ENCODE measurements at regions of chr19 and their contacts with region 1.

Region 1: DNA sequence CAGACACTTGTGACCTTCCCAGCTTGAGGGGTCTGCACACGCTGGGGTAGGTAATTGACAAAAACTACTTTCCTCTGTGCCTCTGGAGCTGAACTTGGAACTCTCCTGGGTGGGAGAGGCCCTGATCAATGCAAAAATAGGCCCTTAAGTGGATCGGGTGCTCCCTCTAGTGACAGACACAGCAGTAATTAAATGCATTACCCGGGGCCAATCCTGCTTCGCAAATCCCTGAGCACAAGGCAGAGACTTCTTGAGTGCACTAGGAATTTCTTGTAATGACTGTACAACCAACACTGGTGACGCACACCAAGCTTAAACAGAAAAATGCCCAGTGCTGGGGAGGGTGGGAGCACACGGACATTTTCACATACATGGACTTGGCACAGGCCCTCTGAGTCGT is 10.6 kb upstream of the UBE2S start:
- DNase-seq: peak in 8 of 9 donors; percentile 34 to 72 (median 58)
- ATAC-seq: peak; percentile 82
- H3K4me3 ChIP-seq: no peak overlapping the region
- H3K4me3 Mint-ChIP-seq: peak overlapping the region in 2 of 10 donors; percentile 30 to 41
- H3K27ac ChIP-seq: no peak overlapping the region
- H3K27ac Mint-ChIP-seq: peak overlapping the region in 4 of 9 donors; percentile 7 to 90 (median 31)
- H3K4me1 ChIP-seq: peaks cover 16 to 29% of the 10 kb centered on the region in 2 donors
- H3K4me1 Mint-ChIP-seq: peaks cover 7 to 36% (median 23%) of the 10 kb centered on the region in 7 donors
- H3K27me3 ChIP-seq: no peaks in the 10 kb centered on the region
- H3K27me3 Mint-ChIP-seq: peaks cover 0 to 24% (median 0%) of the 10 kb centered on the region in 5 donors

Region 2: DNA sequence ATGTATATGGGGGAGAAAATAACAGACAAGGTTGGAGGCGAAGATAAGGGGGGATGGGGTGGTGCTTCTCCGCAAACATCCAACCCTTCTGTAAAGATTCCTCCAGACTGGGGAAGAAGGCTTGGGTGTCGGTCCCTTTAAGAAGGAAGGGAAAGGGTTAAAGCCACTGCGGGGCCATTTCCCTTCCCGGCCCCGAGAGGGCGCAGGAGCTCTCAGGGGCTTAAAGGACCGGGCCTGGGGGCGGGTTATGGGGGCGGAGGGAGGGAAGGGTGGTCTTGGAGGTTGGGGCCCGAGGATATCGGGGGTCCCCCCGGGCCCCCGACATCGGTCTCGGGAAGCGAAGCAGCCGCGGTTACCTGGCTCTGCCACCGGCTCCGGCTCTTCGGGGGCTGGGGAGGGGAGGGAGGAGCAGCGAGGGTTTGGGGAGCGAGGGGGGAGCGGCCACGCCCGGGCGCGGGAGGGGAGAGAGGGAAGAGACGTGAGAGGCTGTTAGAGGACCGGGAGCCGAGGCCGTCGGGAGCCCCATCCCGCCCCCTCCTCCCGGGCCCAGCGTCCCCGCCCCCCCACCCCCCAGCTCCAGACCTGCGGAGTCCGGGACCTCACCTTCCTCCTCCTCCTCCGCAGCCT is 272.0 kb before region 1 on chr19:
- CTCF ChIA-PET with region 1: interaction called, 3 read pairs
- POLR2A ChIA-PET with region 1: no interaction called
- intact Hi-C with region 1: loop called (anchors 1 kb)
- DNase-seq: no peak
- ATAC-seq: no peak
- H3K4me3 ChIP-seq: no peak overlapping the region
- H3K4me3 Mint-ChIP-seq: peak overlapping the region in 1 of 10 donors; percentile 28
- H3K27ac ChIP-seq: no peak overlapping the region
- H3K27ac Mint-ChIP-seq: no peak overlapping the region
- H3K4me1 ChIP-seq: no peaks in the 10 kb centered on the region
- H3K4me1 Mint-ChIP-seq: peaks cover under 1 to 14% (median 8%) of the 10 kb centered on the region in 7 donors
- H3K27me3 ChIP-seq: peaks cover 10 to 11% of the 10 kb centered on the region in 2 donors
- H3K27me3 Mint-ChIP-seq: peaks cover 49 to 65% (median 52%) of the 10 kb centered on the region in 5 donors

Region 3: DNA sequence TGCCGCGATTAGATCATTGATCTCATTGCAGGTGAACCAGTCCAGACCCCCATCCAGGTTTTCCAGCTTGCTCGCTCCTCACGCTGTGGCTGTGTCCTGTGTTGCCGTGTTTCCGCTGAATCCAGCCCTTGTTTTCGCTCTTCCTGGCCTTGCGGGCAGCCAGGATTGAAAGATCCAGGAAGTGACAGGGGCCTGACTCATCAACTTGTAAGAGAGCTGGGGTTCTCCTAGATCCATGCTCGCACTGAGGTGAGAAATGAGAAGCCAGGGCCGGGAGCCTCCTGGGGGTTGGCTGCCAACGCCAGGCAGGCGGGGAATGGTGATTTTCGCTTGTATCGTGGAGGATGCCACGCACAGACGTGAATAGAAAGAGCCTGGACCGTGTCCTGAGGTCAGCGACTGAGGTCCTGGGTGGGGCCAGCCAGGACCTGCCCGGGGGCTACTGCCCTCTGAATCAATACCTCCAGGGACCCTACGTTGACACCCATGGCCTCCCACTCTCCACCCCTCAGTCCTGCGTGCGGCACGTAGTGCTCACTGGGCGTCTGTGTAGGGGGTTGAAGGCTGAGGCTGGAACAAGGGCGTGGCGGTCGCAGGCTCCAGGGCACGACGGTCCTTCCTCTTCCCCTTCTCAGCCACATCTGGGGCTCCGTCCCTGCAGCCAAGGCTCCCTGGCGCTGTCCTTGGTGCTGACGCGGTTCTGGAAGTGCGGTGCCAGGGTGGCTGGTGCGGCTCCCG is 201.6 kb before region 1 on chr19:
- CTCF ChIA-PET with region 1: no interaction called
- POLR2A ChIA-PET with region 1: no interaction called
- intact Hi-C with region 1: loop called in 1 of 2 experiments (anchors 1 kb)
- DNase-seq: peak in 8 of 9 donors; percentile 10 to 69 (median 32)
- ATAC-seq: peak; percentile 80
- H3K4me3 ChIP-seq: no peak overlapping the region
- H3K4me3 Mint-ChIP-seq: peak overlapping the region in 7 of 10 donors; percentile 16 to 66 (median 35)
- H3K27ac ChIP-seq: no peak overlapping the region
- H3K27ac Mint-ChIP-seq: peak overlapping the region in 2 of 9 donors; percentile 55 to 62
- H3K4me1 ChIP-seq: peaks cover 0 to 10% of the 10 kb centered on the region in 2 donors
- H3K4me1 Mint-ChIP-seq: peaks cover 11 to 18% (median 12%) of the 10 kb centered on the region in 7 donors
- H3K27me3 ChIP-seq: no peaks in the 10 kb centered on the region
- H3K27me3 Mint-ChIP-seq: peaks cover 5 to 31% (median 29%) of the 10 kb centered on the region in 5 donors

Region 4: DNA sequence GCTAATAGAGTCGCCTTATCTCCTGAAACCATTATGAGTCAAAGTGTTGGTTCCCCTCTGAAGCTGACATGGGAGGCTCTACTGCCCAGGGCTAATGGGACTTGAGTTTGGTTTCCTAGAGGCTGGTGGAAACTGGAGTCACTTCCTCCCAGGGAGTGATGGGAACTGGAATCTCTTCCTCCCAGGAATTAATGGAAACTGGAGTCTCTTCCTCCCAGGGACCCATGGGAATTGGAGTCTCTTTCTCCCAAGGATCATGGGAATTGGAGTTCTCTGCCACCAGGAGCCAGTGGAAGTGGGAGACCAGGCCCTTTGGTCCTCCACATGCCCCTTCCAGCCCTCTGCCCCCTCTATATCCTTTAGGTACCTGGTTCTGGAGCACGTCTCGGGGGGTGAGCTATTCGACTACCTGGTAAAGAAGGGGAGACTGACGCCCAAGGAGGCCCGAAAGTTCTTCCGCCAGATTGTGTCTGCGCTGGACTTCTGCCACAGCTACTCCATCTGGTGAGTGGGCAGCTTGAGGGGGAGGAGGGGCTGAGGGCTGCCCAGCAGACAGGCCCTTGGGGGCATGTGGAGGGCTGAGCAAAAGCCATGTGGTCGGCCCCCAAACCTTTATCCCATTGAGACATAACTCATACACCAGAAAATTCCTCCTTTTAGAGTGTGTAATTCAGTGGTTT is 128.9 kb before region 1 on chr19:
- CTCF ChIA-PET with region 1: interaction called, 5 read pairs
- POLR2A ChIA-PET with region 1: no interaction called
- intact Hi-C with region 1: loop called in 1 of 2 experiments (anchors 1 kb)
- DNase-seq: no peak
- ATAC-seq: no peak
- H3K4me3 ChIP-seq: no peak overlapping the region
- H3K4me3 Mint-ChIP-seq: no peak overlapping the region
- H3K27ac ChIP-seq: no peak overlapping the region
- H3K27ac Mint-ChIP-seq: no peak overlapping the region
- H3K4me1 ChIP-seq: no peaks in the 10 kb centered on the region
- H3K4me1 Mint-ChIP-seq: peaks cover 0 to 9% (median 5%) of the 10 kb centered on the region in 7 donors
- H3K27me3 ChIP-seq: no peaks in the 10 kb centered on the region
- H3K27me3 Mint-ChIP-seq: no peaks in the 10 kb centered on the region

Region 5: DNA sequence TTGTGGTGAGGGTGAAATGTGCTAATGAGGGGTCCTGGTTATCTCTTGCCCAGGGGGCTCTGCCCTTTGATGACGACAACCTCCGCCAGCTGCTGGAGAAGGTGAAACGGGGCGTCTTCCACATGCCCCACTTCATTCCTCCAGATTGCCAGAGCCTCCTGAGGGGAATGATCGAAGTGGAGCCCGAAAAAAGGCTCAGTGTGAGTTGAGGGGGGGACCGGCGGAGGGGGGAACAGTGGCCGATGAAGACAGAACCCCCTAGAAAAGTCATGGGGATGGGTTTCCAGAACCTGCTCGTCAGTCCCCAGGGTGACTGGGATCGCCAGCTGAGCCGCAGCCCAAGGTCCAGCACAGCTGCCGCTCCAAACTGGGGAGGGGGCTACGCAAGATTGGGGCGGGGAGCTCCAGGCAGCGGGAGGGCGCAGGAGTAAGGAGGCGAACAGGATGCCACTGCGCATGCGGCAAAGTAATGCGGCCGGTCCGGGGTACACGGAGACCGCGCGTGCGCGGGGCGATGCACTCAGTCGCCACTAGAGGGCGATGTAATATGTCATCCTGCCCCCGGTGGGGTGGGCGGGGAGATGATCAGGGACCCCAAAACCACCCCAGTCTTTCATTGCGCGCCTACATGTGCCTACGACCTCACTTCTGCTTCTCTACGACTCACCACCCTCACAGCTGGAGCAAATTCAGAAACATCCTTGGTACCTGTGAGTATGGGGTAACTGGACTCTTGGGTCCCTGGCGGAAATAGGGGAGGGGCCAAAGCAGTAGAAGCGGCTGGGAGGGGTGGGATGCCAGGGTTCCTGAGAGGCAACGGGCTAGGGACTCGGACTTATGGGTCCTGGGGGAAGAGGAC is 116.5 kb before region 1 on chr19:
- CTCF ChIA-PET with region 1: interaction called, 11 read pairs
- POLR2A ChIA-PET with region 1: no interaction called
- intact Hi-C with region 1: loop called in 1 of 2 experiments (anchors 1 kb)
- DNase-seq: peak; percentile 84 to 97 (median 91)
- ATAC-seq: peak; percentile 97
- H3K4me3 ChIP-seq: peak overlapping the region; percentile 61
- H3K4me3 Mint-ChIP-seq: peak overlapping the region; percentile 77 to 97 (median 88)
- H3K27ac ChIP-seq: peak overlapping the region; percentile 66
- H3K27ac Mint-ChIP-seq: peak overlapping the region; percentile 66 to 95 (median 84)
- H3K4me1 ChIP-seq: peaks cover 5 to 10% of the 10 kb centered on the region in 2 donors
- H3K4me1 Mint-ChIP-seq: peaks cover 0 to 17% (median 11%) of the 10 kb centered on the region in 7 donors
- H3K27me3 ChIP-seq: no peaks in the 10 kb centered on the region
- H3K27me3 Mint-ChIP-seq: peaks cover 0 to 3% (median 0%) of the 10 kb centered on the region in 5 donors

Region 6: DNA sequence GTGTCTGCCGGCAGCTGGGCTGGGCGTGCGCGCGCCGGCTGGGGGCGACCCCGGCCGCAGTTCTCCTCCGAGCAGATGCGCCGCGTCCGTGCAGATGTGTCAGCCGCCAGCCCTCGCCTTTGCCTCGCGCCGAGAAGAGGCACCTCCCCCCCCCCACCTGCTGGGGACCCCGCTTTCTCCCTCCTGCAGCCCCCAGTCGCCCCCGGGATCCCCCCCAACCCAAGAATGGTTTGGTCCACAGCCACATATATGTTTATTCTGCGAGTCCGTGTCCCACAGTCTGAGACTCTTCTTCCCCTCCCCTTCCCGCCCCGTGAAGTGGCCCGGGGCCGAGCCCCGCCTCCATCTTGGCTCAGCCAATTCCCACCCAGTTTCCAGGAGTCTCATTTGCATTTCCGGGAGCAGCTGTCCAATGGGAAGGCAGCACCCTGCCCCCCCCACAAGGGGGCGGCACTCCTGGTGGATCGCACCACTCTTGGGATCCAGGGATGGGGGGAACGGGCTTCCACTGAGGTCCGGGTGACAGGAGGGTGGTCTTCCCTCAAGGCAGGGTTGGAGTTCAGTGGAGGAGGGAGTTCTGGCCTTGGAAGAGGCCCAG is 34.7 kb after region 1 on chr19:
- CTCF ChIA-PET with region 1: no interaction called
- POLR2A ChIA-PET with region 1: no interaction called
- intact Hi-C with region 1: loop called in 1 of 2 experiments (anchors 5 kb)
- DNase-seq: peak in 3 of 9 donors; percentile 25 to 48 (median 25)
- ATAC-seq: peak; percentile 73
- H3K4me3 ChIP-seq: no peak overlapping the region
- H3K4me3 Mint-ChIP-seq: peak overlapping the region in 6 of 10 donors; percentile 44 to 82 (median 64)
- H3K27ac ChIP-seq: no peak overlapping the region
- H3K27ac Mint-ChIP-seq: peak overlapping the region in 1 of 9 donors; percentile 9
- H3K4me1 ChIP-seq: peaks cover 0 to 17% of the 10 kb centered on the region in 2 donors
- H3K4me1 Mint-ChIP-seq: peaks cover 7 to 21% (median 15%) of the 10 kb centered on the region in 7 donors
- H3K27me3 ChIP-seq: peaks cover 3 to 22% of the 10 kb centered on the region in 2 donors
- H3K27me3 Mint-ChIP-seq: peaks cover 8 to 33% (median 19%) of the 10 kb centered on the region in 5 donors

Region 7: GRCh38 chr19:55490478-55491432 is 72.6 kb after region 1 on chr19:
- CTCF ChIA-PET with region 1: no interaction called
- POLR2A ChIA-PET with region 1: no interaction called
- intact Hi-C with region 1: no loop called
- DNase-seq: no peak
- ATAC-seq: no peak
- H3K4me3 ChIP-seq: no peak overlapping the region
- H3K4me3 Mint-ChIP-seq: no peak overlapping the region
- H3K27ac ChIP-seq: no peak overlapping the region
- H3K27ac Mint-ChIP-seq: no peak overlapping the region
- H3K4me1 ChIP-seq: no peaks in the 10 kb centered on the region
- H3K4me1 Mint-ChIP-seq: peaks cover 5 to 13% (median 5%) of the 10 kb centered on the region in 7 donors
- H3K27me3 ChIP-seq: no peaks in the 10 kb centered on the region
- H3K27me3 Mint-ChIP-seq: peaks cover 0 to 5% (median 0%) of the 10 kb centered on the region in 5 donors

Measured in naive thymus-derived CD4-positive, alpha-beta T cell (primary cell).